Activated naive CD4-positive, alpha-beta T cell treated with anti-CD3 and anti-CD28 coated beads for 36 hours (primary cell): ENCODE measurements at regions of chr1 and their contacts with region 1.

Region 1: GRCh38 chr1:77926561-77927357 is 38.3 kb downstream of the NEXN start:
- DNase-seq: no peak
- H3K4me3 Mint-ChIP-seq: peak overlapping the region; percentile 70
- H3K27ac Mint-ChIP-seq: peak overlapping the region; percentile 69
- H3K4me1 Mint-ChIP-seq: peaks cover 10% of the 10 kb centered on the region
- H3K27me3 Mint-ChIP-seq: no peaks in the 10 kb centered on the region

Region 2: GRCh38 chr1:78045926-78046778 is 119.4 kb after region 1 on chr1 and contains the start of gene GIPC2:
- CTCF ChIA-PET with region 1: no interaction called
- intact Hi-C with region 1: loop called (anchors 5 kb)
- DNase-seq: peak; percentile 63
- H3K4me3 Mint-ChIP-seq: peak within 1 kb of the TSS; percentile 74
- H3K27ac Mint-ChIP-seq: no peak within 1 kb of the TSS
- H3K4me1 Mint-ChIP-seq: peaks cover 25% of the 10 kb centered on the region
- H3K27me3 Mint-ChIP-seq: peaks cover 38% of the 10 kb centered on the region
- total RNA-seq, gene GIPC2: 0.10 to 0.31 TPM